SK-N-SH (cell line): ENCODE measurements at regions of chr12 and their contacts with region 1.

Region 1: DNA sequence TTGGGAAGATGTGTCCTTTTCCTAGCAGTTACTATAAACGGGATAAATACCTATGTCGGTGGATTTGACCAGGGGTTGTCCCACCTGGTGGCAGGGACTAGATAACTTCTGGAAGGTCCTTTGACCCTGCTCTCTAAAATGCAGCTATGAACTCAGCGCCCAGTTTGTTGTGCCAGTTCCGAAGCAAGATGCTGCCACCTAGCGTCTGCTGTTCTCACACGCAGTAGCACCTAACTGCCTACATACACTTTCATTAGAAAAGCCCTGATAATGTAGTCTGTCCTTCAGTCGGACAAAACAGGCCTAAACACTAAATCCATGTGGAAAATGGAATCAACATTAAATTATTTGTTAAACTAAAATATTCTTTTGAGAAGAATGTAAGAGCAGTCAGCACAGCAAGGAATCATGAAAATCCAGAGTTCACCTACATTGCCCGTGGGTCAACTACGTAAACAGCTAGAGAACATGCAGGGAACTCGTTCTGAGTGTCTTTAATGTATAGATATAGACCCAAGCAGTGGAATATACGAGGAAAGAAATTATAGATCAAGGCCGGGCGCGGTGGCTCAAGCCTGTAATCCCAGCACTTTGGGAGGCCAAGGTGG is 51.1 kb upstream of the CRACR2A start:
- DNase-seq: peak; percentile 52
- H3K4me3 ChIP-seq: no peak overlapping the region; a peak in 1 of 4 replicates
- H3K27ac ChIP-seq: no peak overlapping the region
- H3K4me1 ChIP-seq: peaks cover 0 to 8% of the 10 kb centered on the region in 2 experiments; a peak in 1 of 4 replicates
- H3K27me3 ChIP-seq: no peaks in the 10 kb centered on the region
- CTCF ChIP-seq: peak; percentile 96
- EP300 ChIP-seq: no peak
- RAD21 ChIP-seq: peak; percentile 89

Region 2: DNA sequence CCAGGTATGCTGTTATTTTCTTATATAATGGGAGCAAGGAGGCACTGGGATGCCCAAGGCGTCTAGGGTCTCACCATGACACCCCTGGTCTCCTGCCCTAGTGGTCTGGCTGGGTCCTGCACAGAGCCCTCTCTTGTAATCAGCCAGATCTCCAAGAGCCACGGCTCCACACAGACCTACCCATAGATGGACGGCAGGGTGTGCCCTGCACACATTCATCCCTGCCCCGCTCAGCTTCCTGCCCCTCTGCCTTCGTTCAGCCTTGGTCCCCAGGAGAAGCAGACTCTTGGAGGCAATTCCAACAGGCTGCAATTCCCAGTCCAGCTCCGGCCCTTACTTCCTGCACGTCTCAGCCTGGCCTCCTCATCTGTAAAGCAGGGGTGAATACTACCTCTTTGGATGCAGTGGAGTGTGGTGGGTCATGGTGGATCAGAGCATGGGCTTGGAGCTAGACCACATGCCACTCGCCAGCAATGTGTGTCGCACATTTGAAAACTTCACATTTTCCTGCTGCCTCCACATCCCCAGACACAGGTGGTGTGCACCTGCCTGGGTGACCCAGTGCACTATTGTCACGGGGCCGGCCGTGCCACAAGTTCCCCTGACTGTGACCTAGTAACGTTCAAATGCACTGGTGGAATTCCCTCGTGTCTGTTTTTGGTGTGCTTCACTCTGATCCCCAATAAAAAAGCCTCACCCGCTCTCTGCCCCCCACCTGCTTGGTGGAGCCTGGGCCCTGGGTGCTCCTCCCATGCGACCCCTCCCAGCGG is 484.1 kb before region 1 on chr12:
- CTCF ChIA-PET with region 1: interaction called, 25 read pairs
- POLR2A ChIA-PET with region 1: no interaction called
- DNase-seq: no peak
- H3K4me3 ChIP-seq: no peak overlapping the region
- H3K27ac ChIP-seq: no peak overlapping the region
- H3K4me1 ChIP-seq: peaks cover 0 to 33% of the 10 kb centered on the region in 2 experiments; a peak in 2 of 4 replicates
- H3K27me3 ChIP-seq: peaks cover 9% of the 10 kb centered on the region
- CTCF ChIP-seq: no peak; the same call in 1 of the 2 replicates
- EP300 ChIP-seq: no peak
- RAD21 ChIP-seq: no peak

Region 3: DNA sequence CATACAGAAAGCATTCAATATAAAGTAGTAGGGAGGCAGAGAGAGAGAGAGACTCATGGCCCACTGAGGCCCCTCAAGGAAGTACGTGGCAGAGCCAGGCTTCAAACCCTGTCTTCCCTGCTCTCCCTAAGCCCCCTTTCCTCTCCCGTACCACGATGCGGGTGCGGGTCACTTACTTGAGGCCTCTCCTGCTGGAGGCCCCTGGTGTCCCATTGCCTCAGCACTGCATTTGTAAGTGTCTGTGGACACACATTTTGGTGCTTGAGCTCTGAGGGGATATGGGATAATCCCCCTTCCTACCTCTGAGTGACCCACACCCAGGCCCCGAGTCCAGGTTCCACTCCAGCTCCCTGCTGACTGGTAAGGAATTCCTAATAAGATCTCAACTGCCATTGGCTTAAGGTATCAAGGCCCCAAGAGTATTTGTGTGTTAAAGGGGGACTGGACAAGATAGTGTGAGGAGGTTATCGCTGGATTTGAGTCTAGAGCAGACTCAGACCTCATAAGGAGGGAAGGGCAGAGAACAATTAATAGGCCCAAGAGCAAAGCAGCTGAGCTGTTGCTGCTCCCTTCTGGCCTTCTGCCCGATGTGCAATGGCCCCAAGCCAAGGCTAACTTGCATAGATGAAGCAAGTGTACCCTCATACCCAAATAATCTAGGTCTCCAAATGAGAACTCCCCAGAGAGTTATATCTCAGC is 122.9 kb before region 1 on chr12:
- CTCF ChIA-PET with region 1: interaction called, 13 read pairs
- POLR2A ChIA-PET with region 1: no interaction called
- DNase-seq: peak; percentile 51
- H3K4me3 ChIP-seq: no peak overlapping the region
- H3K27ac ChIP-seq: no peak overlapping the region
- H3K4me1 ChIP-seq: peaks cover 0 to 29% of the 10 kb centered on the region in 2 experiments; a peak in 2 of 4 replicates
- H3K27me3 ChIP-seq: no peaks in the 10 kb centered on the region; the same call in 1 of the 2 replicates
- CTCF ChIP-seq: peak; percentile 42
- EP300 ChIP-seq: no peak
- RAD21 ChIP-seq: peak; percentile 72

Region 4: GRCh38 chr12:3815094-3815766 is 11.3 kb after region 1 on chr12:
- CTCF ChIA-PET with region 1: interaction called, 39 read pairs
- POLR2A ChIA-PET with region 1: no interaction called
- DNase-seq: no peak
- H3K4me3 ChIP-seq: no peak overlapping the region
- H3K27ac ChIP-seq: no peak overlapping the region
- H3K4me1 ChIP-seq: no peaks in the 10 kb centered on the region
- H3K27me3 ChIP-seq: no peaks in the 10 kb centered on the region
- CTCF ChIP-seq: no peak
- EP300 ChIP-seq: no peak
- RAD21 ChIP-seq: no peak

Region 5: DNA sequence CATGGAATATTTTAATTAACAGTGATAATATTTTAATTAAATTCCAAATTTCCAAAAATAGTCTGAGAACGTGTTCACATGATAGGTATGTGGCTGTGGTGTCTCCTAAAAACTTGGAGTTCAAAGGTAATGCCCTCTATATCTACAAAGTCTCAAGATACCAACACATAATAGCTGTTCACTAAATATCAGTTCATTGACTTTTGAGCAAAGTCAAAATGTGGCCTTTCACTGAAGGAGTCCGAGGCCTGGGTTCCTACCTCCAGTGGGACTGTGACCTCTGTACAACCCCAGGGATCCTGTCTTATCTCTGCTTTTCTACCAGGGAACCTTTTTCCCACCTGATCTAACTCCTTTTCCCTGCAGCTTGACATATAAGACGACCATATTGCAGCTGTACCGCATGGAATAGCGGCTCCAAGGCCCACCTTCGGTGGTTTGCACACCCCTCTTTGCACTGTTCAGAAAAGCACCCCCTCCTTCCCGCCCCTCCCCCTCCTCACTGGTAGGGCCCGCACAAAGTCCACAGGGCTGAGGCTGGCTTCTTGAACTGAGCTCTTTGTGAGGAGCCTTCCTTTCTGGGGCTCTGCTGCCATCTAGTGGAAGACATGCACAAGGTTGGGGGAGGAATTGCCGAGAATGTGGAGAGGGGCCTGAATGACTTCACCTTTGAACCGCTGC is 472.7 kb after region 1 on chr12:
- CTCF ChIA-PET with region 1: no interaction called
- POLR2A ChIA-PET with region 1: no interaction called
- DNase-seq: peak; percentile 84
- H3K4me3 ChIP-seq: no peak overlapping the region; a peak in 1 of 4 replicates
- H3K27ac ChIP-seq: no peak overlapping the region
- H3K4me1 ChIP-seq: peaks cover 0 to 4% of the 10 kb centered on the region in 2 experiments; a peak in 2 of 4 replicates
- H3K27me3 ChIP-seq: peaks cover 97% of the 10 kb centered on the region
- CTCF ChIP-seq: peak; percentile 91
- EP300 ChIP-seq: no peak
- RAD21 ChIP-seq: peak; percentile 89